HEK293T (cell line): ENCODE measurements at regions of chr21 and their contacts with region 1.

Region 1: DNA sequence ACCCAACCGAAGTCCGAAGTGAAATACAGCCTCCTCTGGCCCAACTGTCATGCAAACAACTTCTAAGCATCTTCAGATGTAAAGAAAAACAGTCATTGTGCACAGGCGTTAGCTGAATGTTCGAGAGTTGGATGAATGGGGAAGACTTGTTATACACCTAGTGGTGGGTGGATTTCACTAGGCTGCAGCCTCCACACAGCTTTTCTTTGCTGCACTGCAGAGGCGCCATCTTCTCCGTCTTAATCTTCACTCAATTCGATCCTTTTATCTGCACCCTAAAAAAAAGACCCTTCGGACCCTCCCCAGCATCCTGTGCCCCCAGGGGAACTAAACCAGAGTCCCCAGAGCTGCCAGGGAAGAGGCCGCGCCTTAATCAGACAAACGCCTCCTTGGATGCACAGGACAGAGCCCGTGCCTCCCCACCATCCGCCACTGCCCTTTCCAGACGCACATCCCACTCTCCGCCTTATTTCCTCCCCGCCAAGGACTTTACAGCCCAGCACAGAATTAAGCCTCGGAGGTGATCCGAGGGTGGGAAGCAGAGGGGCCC is 1.4 kb downstream of the APP start:
- DNase-seq: peak; percentile 73

Region 2: GRCh38 chr21:25750085-25750484 is 419.1 kb before region 1 on chr21:
- CTCF ChIA-PET with region 1: no interaction called
- POLR2A ChIA-PET with region 1: no interaction called
- DNase-seq: no peak

Region 3: DNA sequence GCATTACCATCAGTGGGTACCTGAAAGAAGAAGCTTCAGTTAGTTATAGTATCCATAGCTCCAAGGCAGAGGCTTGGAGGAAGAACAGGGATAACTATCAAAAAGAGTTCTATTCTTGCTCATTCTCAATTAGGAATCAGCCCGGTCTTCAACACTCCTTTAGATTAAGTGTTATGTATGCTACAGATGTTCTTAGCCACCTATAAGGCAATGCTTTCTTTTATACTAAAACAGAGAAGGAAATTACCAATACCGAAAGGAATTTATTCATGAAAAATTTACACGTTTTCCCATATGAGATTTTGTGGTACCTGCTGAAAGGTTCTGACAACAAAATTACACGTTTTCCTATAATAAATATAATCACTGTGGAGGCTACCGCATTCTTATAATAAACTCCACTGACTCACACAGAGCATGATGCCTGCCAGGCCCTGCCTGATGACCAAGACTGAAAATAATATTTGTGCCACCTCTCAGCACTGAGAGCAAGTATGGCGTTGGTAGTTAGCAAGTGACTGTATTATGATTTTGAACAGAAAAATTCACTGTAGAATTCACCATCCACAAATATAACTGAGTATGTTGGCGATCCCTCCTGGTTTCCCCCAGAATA is 56.9 kb before region 1 on chr21:
- CTCF ChIA-PET with region 1: no interaction called
- POLR2A ChIA-PET with region 1: no interaction called
- DNase-seq: no peak

Region 4: GRCh38 chr21:26124421-26124833 is 44.7 kb before region 1 on chr21:
- CTCF ChIA-PET with region 1: no interaction called
- POLR2A ChIA-PET with region 1: interaction called, 11 read pairs
- DNase-seq: no peak

Region 5: GRCh38 chr21:26212211-26212610 is 43.1 kb after region 1 on chr21:
- CTCF ChIA-PET with region 1: no interaction called
- POLR2A ChIA-PET with region 1: no interaction called
- DNase-seq: no peak